MCF 10A (cell line): ENCODE measurements at regions of chr5 and their contacts with region 1.

Region 1: DNA sequence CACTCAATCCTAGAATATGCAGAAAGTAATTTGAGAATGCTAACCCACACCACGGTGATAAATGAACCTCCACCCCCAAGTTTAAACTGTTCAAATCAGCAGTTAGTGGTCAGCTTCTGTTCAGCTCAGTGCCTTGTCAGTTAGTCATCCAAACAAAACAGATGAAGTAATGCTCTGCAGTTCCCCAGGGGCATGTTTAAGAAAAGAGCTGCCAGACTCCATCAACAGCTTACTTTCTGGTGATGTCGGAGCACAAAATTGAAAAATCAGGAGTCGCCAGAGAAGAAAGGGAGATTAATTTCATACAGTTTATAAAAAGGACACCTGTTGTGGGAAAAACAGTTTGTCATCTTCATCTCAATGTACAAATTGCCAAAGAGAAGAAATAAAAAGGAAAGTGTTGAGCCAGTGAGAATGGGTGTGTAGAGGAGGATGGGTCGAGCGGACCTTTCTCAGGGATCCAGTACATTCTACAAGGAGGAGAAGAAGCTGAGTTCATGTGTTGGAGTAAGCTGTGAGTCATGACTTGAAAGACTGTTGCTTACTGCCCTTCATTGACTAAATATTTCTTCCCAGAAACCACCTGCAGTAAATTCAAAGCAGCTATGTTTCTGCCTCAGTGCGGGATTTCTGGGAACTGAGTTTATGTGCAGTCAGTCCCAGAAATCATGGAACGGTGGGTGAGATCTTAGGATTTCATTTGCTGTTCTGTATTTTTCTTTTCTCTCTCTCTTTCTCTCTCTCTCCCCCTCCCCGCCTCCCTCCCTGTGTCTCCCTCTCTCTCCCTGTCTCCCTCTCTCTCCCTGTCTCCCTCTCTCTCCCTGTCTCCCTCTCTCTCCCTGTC is 13.7 kb downstream of the TRIO start:
- DNase-seq: peak; percentile 93
- H3K4me3 Mint-ChIP-seq: no peak overlapping the region
- H3K27ac Mint-ChIP-seq: no peak overlapping the region
- H3K4me1 Mint-ChIP-seq: peaks cover 29% of the 10 kb centered on the region
- H3K27me3 Mint-ChIP-seq: no peaks in the 10 kb centered on the region
- CTCF ChIP-seq: no peak

Region 2: DNA sequence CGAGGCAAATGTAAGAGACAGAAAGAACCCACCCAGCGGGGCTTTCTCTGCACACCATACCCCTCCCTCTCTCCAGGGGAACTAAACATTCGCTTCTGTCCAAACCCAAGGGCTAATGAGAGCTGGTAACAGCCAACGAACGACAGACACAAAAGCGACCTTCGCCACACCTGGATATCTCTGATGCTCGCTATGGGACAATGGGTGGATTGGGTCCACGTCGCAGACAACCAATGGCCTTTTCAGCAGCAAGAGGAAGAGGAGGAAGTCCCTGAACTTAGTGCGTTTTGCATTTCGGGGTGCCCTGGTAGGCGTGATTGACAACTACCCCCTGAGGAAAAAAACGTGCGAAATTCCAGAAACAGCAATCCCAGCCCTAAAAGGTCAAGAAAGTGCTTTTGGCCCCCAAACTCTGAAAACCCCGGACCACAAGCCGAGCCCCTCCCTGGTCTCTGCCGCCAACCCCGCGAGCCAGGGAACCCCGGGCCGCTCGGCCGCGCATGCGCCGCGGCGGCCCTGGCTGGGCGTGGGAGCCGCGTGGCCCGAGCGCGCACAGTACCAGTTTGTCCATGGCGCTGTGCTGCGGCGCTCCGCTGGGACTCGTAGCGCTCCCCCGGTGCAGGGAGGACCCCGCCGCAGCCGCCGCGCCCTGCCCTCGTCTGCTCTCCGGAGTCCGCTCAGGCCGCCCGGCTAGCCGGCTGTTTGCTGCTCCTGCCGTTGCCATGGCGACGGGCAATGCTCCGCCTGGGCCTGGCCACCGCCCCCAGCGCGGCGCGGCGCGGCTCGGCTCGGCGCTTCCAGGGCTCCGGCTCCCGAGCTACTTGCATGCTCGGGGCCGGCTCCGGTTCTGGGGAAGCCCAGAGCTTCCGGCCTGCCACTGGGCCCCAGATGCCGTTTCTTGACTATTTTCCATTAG is 145.5 kb before region 1 on chr5:
- CTCF ChIA-PET with region 1: no interaction called
- POLR2A ChIA-PET with region 1: no interaction called
- intact Hi-C with region 1: no loop called
- DNase-seq: peak; percentile 81
- H3K4me3 Mint-ChIP-seq: peak overlapping the region; percentile 70
- H3K27ac Mint-ChIP-seq: no peak overlapping the region
- H3K4me1 Mint-ChIP-seq: no peaks in the 10 kb centered on the region
- H3K27me3 Mint-ChIP-seq: no peaks in the 10 kb centered on the region
- CTCF ChIP-seq: no peak

Region 3: GRCh38 chr5:14168144-14168792 is 11.4 kb after region 1 on chr5:
- CTCF ChIA-PET with region 1: interaction called, 3 read pairs
- POLR2A ChIA-PET with region 1: interaction called, 54 read pairs
- intact Hi-C with region 1: no loop called
- DNase-seq: peak; percentile 44
- H3K4me3 Mint-ChIP-seq: no peak overlapping the region
- H3K27ac Mint-ChIP-seq: peak overlapping the region; percentile 63
- H3K4me1 Mint-ChIP-seq: peaks cover 60% of the 10 kb centered on the region
- H3K27me3 Mint-ChIP-seq: no peaks in the 10 kb centered on the region
- CTCF ChIP-seq: no peak

Region 4: DNA sequence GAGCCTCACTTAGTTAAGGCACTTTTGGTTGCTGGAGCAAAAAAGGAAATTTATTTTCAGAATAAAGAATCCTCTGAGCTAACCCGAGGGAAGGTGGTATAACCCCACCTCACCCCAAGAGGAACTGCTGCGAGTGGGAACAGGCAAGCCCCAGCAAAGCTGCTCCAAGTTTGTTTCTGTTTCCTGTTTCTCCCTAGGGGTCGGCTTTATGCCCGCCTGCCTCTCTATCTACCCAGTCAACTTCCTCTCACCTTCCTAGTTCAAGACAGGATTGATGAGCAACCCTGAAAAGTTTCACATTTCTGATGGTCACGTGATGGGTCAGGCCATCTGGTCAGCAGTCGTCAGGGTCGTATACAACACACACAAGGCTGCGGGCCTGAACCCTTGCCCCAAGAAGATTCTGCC is 17.4 kb after region 1 on chr5:
- CTCF ChIA-PET with region 1: interaction called, 3 read pairs
- POLR2A ChIA-PET with region 1: interaction called, 54 read pairs
- intact Hi-C with region 1: no loop called
- DNase-seq: no peak
- H3K4me3 Mint-ChIP-seq: no peak overlapping the region
- H3K27ac Mint-ChIP-seq: peak overlapping the region; percentile 90
- H3K4me1 Mint-ChIP-seq: peaks cover 45% of the 10 kb centered on the region
- H3K27me3 Mint-ChIP-seq: no peaks in the 10 kb centered on the region
- CTCF ChIP-seq: no peak

Region 5: GRCh38 chr5:14184725-14185124 is 27.9 kb after region 1 on chr5:
- CTCF ChIA-PET with region 1: interaction called, 5 read pairs
- POLR2A ChIA-PET with region 1: interaction called, 63 read pairs
- intact Hi-C with region 1: no loop called
- DNase-seq: peak; percentile 38
- H3K4me3 Mint-ChIP-seq: peak overlapping the region; percentile 56
- H3K27ac Mint-ChIP-seq: peak overlapping the region; percentile 98
- H3K4me1 Mint-ChIP-seq: peaks cover 66% of the 10 kb centered on the region
- H3K27me3 Mint-ChIP-seq: no peaks in the 10 kb centered on the region
- CTCF ChIP-seq: no peak

Region 6: DNA sequence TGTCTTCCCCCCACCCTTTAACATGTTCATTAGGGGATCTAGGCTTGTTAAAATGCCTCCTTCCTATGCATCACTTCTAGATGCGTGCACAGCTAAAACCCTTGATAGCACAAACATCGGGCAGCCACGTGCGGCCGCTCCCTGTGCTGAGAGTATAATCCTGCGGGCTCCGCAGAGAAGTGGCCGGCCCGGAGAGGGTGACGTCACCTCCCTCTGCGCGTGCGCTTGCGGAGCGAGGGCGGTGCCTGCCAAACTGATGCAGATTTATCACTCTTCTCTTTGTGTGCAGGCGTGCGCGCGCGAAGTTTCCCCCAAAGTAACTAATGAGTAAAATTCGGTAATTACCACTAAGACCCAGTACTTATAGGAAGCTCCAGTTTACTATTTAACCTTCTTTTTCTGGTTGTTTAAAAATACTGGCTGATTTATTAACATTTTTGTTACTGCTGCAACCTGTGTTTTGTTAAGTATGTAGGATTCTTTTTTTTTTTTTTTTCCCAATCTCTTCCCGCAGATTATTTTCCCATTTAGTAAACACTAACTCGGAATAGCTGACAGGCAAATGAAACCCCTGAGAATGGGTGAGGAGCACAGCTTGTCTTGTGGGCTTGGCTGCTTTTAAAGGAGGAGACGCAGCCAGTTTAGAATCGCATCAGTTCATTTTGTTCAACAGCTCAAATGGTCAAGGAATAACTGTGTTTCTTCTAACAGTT is 107.9 kb after region 1 on chr5:
- CTCF ChIA-PET with region 1: interaction called, 20 read pairs
- POLR2A ChIA-PET with region 1: interaction called, 39 read pairs
- intact Hi-C with region 1: no loop called
- DNase-seq: peak; percentile 93
- H3K4me3 Mint-ChIP-seq: peak overlapping the region; percentile 74
- H3K27ac Mint-ChIP-seq: peak overlapping the region; percentile 52
- H3K4me1 Mint-ChIP-seq: peaks cover 53% of the 10 kb centered on the region
- H3K27me3 Mint-ChIP-seq: no peaks in the 10 kb centered on the region
- CTCF ChIP-seq: no peak